ENCODE measurements at regions of chr20 and their contacts with region 1.

Region 1: DNA sequence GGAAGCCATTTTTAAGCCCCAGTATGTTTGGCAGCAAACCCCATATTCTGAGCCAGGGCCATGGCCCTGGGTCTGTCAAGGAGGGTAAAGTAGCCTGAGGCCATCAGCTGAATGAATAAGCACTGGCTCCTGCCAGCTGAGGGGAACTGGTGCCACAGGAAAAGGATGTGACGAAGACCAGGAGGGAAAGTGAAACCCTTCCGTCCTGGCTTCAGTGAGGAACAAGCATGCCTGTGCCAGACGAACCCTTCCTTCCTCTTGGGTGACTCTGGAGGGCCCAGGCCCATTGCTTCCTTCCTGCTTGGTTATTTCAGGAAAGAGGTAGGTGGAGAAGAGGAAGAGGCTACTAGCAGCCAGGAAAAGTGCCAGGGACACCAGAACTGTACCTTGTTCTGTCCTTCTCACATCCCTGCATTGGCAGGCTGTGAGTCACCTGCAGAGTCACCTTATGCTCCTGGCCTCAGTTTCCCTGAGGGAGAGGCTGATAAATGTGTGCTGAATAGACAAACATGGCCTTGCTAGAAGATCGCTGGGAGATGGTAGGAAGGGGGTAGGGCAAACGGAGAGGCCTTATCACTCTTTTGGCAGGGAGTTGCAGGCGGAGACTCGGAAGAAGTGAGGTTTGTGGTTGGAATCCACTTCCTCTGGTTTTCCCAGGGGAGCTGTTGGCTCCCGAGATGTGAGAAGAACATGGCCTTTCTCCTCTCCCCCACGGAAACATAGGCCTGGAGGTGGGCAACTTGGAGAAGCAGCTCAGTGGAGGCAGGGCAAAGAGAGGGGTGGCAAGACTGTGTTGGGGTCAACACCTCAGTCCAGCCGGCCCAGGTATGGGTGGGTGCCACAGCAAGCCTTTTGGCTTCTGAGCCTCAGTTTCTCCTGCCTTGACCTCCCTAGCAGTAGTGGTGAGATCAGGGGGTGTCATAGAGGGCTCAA is 37.4 kb downstream of the COX4I2 start:
- DNase-seq: peak; percentile 61 to 84 (median 63)
- H3K4me3 ChIP-seq: peak overlapping the region; percentile 59 to 87
- H3K4me3 Mint-ChIP-seq: peak overlapping the region; percentile 91 to 97 (median 94)
- H3K27ac ChIP-seq: peak overlapping the region; percentile 75
- H3K27ac Mint-ChIP-seq: peak overlapping the region; percentile 96 to 98 (median 97)
- H3K4me1 ChIP-seq: peaks cover 88% of the 10 kb centered on the region
- H3K4me1 Mint-ChIP-seq: peaks cover 59 to 82% (median 70%) of the 10 kb centered on the region in 4 donors
- H3K27me3 ChIP-seq: no peaks in the 10 kb centered on the region
- H3K27me3 Mint-ChIP-seq: no peaks in the 10 kb centered on the region

Region 2: DNA sequence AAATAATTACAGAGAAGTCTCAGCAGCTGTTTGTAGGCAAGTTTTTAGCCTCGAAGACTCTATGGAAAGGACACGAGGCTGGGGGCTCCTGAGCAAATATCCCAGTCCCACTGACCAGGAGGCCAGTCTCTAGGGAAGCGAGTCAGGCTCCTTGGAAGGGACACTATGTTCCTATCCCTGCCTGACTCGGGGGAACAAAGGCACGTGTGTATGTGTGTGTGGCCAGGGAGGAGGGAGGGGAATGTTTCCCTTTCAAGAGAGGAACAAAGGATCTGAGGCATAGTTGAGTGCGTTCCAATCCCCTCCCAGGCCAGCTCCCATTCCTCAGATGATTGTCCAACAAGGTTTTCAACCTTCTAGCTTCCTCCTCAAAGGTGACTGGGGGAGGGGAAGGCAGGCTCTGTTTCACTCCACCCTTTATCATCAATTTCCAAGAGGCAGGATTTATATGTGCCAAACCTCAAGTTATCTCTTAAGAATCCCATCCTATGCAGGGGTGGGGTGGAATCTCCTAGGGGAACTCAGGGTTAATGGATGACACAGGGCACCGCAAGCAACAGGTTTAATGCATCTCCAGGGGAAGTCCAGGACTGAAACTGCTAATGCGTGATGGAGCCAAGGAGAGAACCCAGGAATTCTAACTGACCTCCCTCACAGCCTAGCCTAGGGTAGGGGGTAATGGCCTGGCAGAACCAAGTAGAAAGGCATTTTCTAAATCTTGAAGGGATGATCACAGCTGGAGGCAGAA is 37.6 kb after region 1 on chr20:
- CTCF ChIA-PET with region 1: no interaction called
- POLR2A ChIA-PET with region 1: interaction called, 125 read pairs
- intact Hi-C with region 1: loop called (anchors 1 kb)
- DNase-seq: no peak
- H3K4me3 ChIP-seq: no peak overlapping the region
- H3K4me3 Mint-ChIP-seq: peak overlapping the region in 4 of 8 donors; percentile 27 to 52 (median 49)
- H3K27ac ChIP-seq: no peak overlapping the region
- H3K27ac Mint-ChIP-seq: peak overlapping the region; percentile 63 to 91 (median 80)
- H3K4me1 ChIP-seq: peaks cover 93% of the 10 kb centered on the region
- H3K4me1 Mint-ChIP-seq: peaks cover 70 to 98% (median 87%) of the 10 kb centered on the region in 4 donors
- H3K27me3 ChIP-seq: no peaks in the 10 kb centered on the region
- H3K27me3 Mint-ChIP-seq: no peaks in the 10 kb centered on the region

Measured in CD4-positive, alpha-beta memory T cell (primary cell).